Head of caudate nucleus (tissue), 42 donors: ENCODE measurements at regions of chr18 and their contacts with region 1.

Region 1: GRCh38 chr18:37385846-37386778 is 179.5 kb downstream of the CELF4 start:
- DNase-seq: peak in 1 of 42 donors; percentile 50

Region 2: GRCh38 chr18:37266290-37266689 is 119.8 kb before region 1 on chr18:
- intact Hi-C with region 1: no loop called
- DNase-seq: no peak

Region 3: GRCh38 chr18:37476182-37476581 is 90.1 kb after region 1 on chr18:
- intact Hi-C with region 1: loop called (anchors 5 kb)
- DNase-seq: peak in 38 of 42 donors; percentile 32 to 86 (median 58)

Region 4: GRCh38 chr18:37537868-37538525 is 151.9 kb after region 1 on chr18:
- intact Hi-C with region 1: loop called (anchors 2 kb)
- DNase-seq: peak; percentile 66 to 91 (median 80)